CD4-positive, alpha-beta memory T cell (primary cell): ENCODE measurements at regions of chr10 and their contacts with region 1.

Region 1: DNA sequence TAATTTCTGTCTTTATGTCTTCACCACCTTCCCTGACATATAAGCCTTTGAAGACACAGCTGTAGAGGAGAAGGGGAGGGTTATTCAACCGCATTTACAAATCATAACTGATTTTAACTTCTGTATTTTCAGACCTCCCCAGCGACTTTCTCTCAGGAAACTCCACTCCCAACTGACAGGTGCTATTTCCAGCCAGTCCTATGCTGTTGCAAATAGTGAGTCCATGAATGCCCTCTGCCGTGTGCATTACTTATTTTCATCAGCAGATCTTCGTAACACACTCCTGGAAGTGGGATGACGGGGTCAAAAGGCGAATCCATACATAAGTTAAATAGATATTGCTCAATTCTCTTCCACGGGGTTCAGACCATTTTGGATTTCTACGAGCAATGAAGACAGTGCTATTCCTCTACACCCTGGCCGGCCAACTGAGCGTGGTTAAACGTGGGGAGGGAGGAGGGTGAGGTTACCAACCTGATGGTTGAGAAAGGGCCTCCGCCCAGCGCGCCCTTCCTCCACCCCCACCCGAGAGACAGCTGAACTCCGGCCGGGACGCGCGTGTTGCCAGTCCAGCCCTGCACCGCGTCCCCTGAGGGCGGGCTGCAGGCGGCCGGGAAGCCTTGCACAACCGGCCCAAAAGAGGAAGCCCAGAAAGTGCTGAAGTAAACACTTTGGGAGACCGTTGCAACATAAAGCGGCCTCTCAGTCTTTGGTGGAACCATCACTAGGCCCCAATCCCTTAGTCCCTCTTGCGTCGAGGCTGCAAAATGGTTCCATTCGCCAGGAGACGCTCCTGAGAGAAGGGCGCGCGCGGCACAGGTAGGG is at the start of gene APBB1IP:
- DNase-seq: peak; percentile 39 to 59 (median 43)
- H3K4me3 ChIP-seq: peak within 1 kb of the TSS; percentile 94
- H3K4me3 Mint-ChIP-seq: peak within 1 kb of the TSS; percentile 94 to 98 (median 96)
- H3K27ac ChIP-seq: peak within 1 kb of the TSS; percentile 89
- H3K27ac Mint-ChIP-seq: peak within 1 kb of the TSS; percentile 92 to 98 (median 96)
- H3K4me1 ChIP-seq: peaks cover 52% of the 10 kb centered on the region
- H3K4me1 Mint-ChIP-seq: peaks cover 39 to 71% (median 55%) of the 10 kb centered on the region in 4 donors
- H3K27me3 ChIP-seq: no peaks in the 10 kb centered on the region
- H3K27me3 Mint-ChIP-seq: no peaks in the 10 kb centered on the region
- total RNA-seq, gene APBB1IP: 106 TPM

Region 2: DNA sequence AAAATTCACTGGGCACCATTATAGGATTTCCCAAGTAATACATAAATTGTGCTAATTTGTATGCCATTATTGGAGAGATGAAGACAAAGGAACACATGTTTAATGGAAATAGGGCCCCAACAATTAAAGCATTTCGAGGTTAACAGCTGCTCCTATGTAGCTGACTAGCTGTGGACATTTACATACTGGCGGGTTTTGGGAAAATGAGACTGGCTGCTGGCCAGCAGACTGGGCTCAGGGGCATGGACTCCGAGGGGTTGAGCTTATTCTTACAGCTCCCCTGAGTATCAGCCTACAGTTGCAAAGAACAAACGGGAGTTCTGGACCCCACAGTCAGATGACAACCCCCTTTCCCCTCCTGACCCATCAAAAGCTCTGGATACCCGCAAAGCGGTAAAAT is 595.7 kb before region 1 on chr10:
- CTCF ChIA-PET with region 1: no interaction called
- POLR2A ChIA-PET with region 1: no interaction called
- intact Hi-C with region 1: no loop called
- DNase-seq: no peak
- H3K4me3 ChIP-seq: no peak overlapping the region
- H3K4me3 Mint-ChIP-seq: no peak overlapping the region
- H3K27ac ChIP-seq: no peak overlapping the region
- H3K27ac Mint-ChIP-seq: no peak overlapping the region
- H3K4me1 ChIP-seq: no peaks in the 10 kb centered on the region
- H3K4me1 Mint-ChIP-seq: no peaks in the 10 kb centered on the region
- H3K27me3 ChIP-seq: no peaks in the 10 kb centered on the region
- H3K27me3 Mint-ChIP-seq: peaks cover 0 to 1% of the 10 kb centered on the region in 2 donors

Region 3: GRCh38 chr10:26334932-26335573 is 102.8 kb before region 1 on chr10:
- CTCF ChIA-PET with region 1: interaction called, 4 read pairs
- POLR2A ChIA-PET with region 1: interaction called, 10 read pairs
- intact Hi-C with region 1: loop called (anchors 5 kb)
- DNase-seq: peak; percentile 66 to 74 (median 72)
- H3K4me3 ChIP-seq: peak overlapping the region; percentile 38 to 53
- H3K4me3 Mint-ChIP-seq: peak overlapping the region; percentile 76 to 93 (median 84)
- H3K27ac ChIP-seq: peak overlapping the region; percentile 5
- H3K27ac Mint-ChIP-seq: peak overlapping the region in 2 of 7 donors; percentile 61 to 79
- H3K4me1 ChIP-seq: peaks cover 4% of the 10 kb centered on the region
- H3K4me1 Mint-ChIP-seq: peaks cover 4 to 8% (median 6%) of the 10 kb centered on the region in 4 donors
- H3K27me3 ChIP-seq: no peaks in the 10 kb centered on the region
- H3K27me3 Mint-ChIP-seq: peaks cover 0 to 2% of the 10 kb centered on the region in 2 donors

Region 4: DNA sequence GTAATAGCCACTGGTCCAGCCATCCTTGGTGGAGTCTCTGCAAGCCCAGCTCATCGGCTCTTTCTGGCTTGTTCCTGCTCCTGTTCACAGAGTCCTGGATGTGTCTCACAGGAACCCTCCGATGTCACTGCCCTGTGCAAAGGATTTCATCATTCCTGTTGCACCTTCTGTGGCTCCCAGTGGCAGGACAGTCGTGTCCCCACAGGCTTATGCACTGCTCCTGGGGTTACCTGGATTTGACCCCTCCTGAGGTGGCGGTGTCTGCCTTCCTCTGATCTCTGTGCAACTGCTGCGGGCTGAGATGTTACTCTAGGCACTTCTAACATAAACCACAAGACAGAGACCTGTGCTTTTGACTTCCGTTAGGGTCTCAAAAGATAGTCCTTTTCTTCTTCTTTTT is 30.9 kb after region 1 on chr10:
- CTCF ChIA-PET with region 1: interaction called, 11 read pairs
- POLR2A ChIA-PET with region 1: interaction called, 45 read pairs
- intact Hi-C with region 1: loop called (anchors 2 kb)
- DNase-seq: peak; percentile 64 to 79 (median 66)
- H3K4me3 ChIP-seq: peak overlapping the region in 1 of 2 donors; percentile 23
- H3K4me3 Mint-ChIP-seq: peak overlapping the region; percentile 69 to 89 (median 82)
- H3K27ac ChIP-seq: peak overlapping the region; percentile 49
- H3K27ac Mint-ChIP-seq: peak overlapping the region; percentile 61 to 94 (median 93)
- H3K4me1 ChIP-seq: peaks cover 97% of the 10 kb centered on the region
- H3K4me1 Mint-ChIP-seq: peaks cover 62 to 98% (median 78%) of the 10 kb centered on the region in 4 donors
- H3K27me3 ChIP-seq: no peaks in the 10 kb centered on the region
- H3K27me3 Mint-ChIP-seq: no peaks in the 10 kb centered on the region

Region 5: DNA sequence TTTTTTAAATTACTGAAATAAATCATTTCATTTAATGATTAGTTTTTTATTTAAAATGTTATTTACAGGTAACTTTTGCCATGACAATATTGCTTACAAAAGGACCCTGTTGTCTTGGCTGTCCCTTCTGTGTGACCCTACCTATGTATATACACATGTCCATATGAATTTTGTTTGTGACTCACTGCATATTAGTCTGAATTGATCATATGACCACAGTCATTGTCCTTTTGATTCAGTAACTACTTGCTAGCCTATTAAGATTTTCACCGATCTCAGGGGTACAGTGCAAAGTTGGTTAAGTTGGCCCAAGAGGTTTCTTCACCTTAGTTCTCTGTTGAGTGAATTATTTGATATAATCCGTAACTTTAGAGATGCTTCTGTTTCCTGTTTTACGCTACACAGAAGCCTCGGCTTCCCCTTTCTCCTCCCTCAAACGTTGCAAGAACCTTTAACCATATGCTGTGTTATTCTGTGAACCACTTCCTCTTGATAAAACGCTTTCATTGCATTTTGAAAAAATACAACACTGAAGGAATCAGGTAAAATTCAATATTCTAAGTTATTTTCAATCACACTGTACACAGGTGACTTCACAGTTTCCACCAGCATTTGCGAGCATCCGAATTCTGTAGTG is 44.2 kb after region 1 on chr10:
- CTCF ChIA-PET with region 1: interaction called, 3 read pairs
- POLR2A ChIA-PET with region 1: interaction called, 167 read pairs
- intact Hi-C with region 1: loop called (anchors 1 kb)
- DNase-seq: peak; percentile 70 to 81 (median 73)
- H3K4me3 ChIP-seq: peak overlapping the region in 1 of 2 donors; percentile 9
- H3K4me3 Mint-ChIP-seq: peak overlapping the region; percentile 36 to 88 (median 70)
- H3K27ac ChIP-seq: peak overlapping the region; percentile 51
- H3K27ac Mint-ChIP-seq: peak overlapping the region; percentile 81 to 97 (median 92)
- H3K4me1 ChIP-seq: peaks cover 96% of the 10 kb centered on the region
- H3K4me1 Mint-ChIP-seq: peaks cover 62 to 81% (median 71%) of the 10 kb centered on the region in 4 donors
- H3K27me3 ChIP-seq: no peaks in the 10 kb centered on the region
- H3K27me3 Mint-ChIP-seq: no peaks in the 10 kb centered on the region

Region 6: DNA sequence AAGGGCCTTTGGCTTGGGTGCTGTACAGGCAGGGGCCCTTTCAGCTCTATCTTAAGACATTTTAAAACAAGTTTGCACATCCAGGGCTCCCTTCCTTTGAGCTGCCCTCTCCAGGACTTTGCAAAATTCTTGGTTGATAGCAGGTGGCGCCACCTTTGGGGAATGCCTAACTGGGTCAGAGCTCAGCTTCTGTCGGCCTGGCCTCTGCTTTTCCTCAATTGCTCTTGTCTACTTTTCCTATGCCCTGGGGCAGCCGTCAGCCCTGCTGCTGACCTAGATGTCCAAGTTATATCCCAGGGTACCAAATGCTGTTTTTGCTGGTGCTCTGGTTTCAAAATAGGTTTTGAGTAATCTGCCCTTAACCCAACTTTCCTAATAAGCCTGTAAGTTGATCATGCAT is 66.1 kb after region 1 on chr10:
- CTCF ChIA-PET with region 1: interaction called, 11 read pairs
- POLR2A ChIA-PET with region 1: interaction called, 14 read pairs
- intact Hi-C with region 1: no loop called
- DNase-seq: no peak
- H3K4me3 ChIP-seq: no peak overlapping the region
- H3K4me3 Mint-ChIP-seq: no peak overlapping the region
- H3K27ac ChIP-seq: no peak overlapping the region
- H3K27ac Mint-ChIP-seq: peak overlapping the region; percentile 10 to 85 (median 66)
- H3K4me1 ChIP-seq: no peaks in the 10 kb centered on the region
- H3K4me1 Mint-ChIP-seq: peaks cover 8 to 34% (median 20%) of the 10 kb centered on the region in 4 donors
- H3K27me3 ChIP-seq: no peaks in the 10 kb centered on the region
- H3K27me3 Mint-ChIP-seq: no peaks in the 10 kb centered on the region

Region 7: DNA sequence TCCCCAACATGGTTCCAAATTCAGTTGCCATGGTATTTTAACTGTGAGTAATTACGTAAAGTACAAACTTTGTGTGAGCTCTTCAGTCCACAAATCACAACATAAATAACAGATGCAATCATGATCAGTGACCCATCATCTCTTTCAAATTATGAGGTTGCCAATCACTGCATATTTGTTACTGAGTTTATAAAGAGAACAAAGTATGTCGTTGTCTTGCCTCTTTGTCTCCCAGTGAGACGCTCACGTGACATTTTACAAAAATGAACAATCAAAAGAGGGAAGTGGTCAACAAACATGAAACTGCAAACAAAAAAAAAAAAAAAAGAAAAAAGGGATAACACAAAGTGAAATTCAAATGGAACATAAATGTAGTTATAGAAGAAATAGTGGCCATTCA is 136.9 kb after region 1 on chr10:
- CTCF ChIA-PET with region 1: no interaction called
- POLR2A ChIA-PET with region 1: no interaction called
- intact Hi-C with region 1: no loop called
- DNase-seq: no peak
- H3K4me3 ChIP-seq: no peak overlapping the region
- H3K4me3 Mint-ChIP-seq: no peak overlapping the region
- H3K27ac ChIP-seq: no peak overlapping the region
- H3K27ac Mint-ChIP-seq: peak overlapping the region in 2 of 7 donors; percentile 22 to 49
- H3K4me1 ChIP-seq: no peaks in the 10 kb centered on the region
- H3K4me1 Mint-ChIP-seq: peaks cover 0 to 2% (median under 1%) of the 10 kb centered on the region in 4 donors
- H3K27me3 ChIP-seq: no peaks in the 10 kb centered on the region
- H3K27me3 Mint-ChIP-seq: no peaks in the 10 kb centered on the region

Region 8: GRCh38 chr10:26776258-26776657 is 338.4 kb after region 1 on chr10:
- CTCF ChIA-PET with region 1: no interaction called
- POLR2A ChIA-PET with region 1: no interaction called
- intact Hi-C with region 1: no loop called
- DNase-seq: no peak
- H3K4me3 ChIP-seq: no peak overlapping the region
- H3K4me3 Mint-ChIP-seq: peak overlapping the region in 1 of 8 donors; percentile 22
- H3K27ac ChIP-seq: no peak overlapping the region
- H3K27ac Mint-ChIP-seq: peak overlapping the region in 2 of 7 donors; percentile 5 to 22
- H3K4me1 ChIP-seq: peaks cover 50% of the 10 kb centered on the region
- H3K4me1 Mint-ChIP-seq: peaks cover 60 to 87% (median 73%) of the 10 kb centered on the region in 4 donors
- H3K27me3 ChIP-seq: no peaks in the 10 kb centered on the region
- H3K27me3 Mint-ChIP-seq: no peaks in the 10 kb centered on the region

Region 9: GRCh38 chr10:27241652-27242472 is 804.0 kb after region 1 on chr10:
- CTCF ChIA-PET with region 1: no interaction called
- POLR2A ChIA-PET with region 1: interaction called, 3 read pairs
- intact Hi-C with region 1: loop called (anchors 5 kb)
- DNase-seq: peak; percentile 85 to 88 (median 87)
- H3K4me3 ChIP-seq: peak overlapping the region; percentile 66 to 94
- H3K4me3 Mint-ChIP-seq: peak overlapping the region; percentile 95 to 99 (median 99)
- H3K27ac ChIP-seq: peak overlapping the region; percentile 89
- H3K27ac Mint-ChIP-seq: peak overlapping the region; percentile 98 to 100 (median 99)
- H3K4me1 ChIP-seq: peaks cover 36% of the 10 kb centered on the region
- H3K4me1 Mint-ChIP-seq: peaks cover 20 to 54% (median 31%) of the 10 kb centered on the region in 4 donors
- H3K27me3 ChIP-seq: no peaks in the 10 kb centered on the region
- H3K27me3 Mint-ChIP-seq: peaks cover 0 to 3% of the 10 kb centered on the region in 2 donors